Cardiac septum (tissue), 1 donor: ENCODE measurements at regions of chr19 and their contacts with region 1.

Region 1: GRCh38 chr19:49983645-49984229 is 22.8 kb upstream of the SIGLEC11 start:
- DNase-seq: no peak

Region 2: GRCh38 chr19:49937750-49938381 is 45.9 kb before region 1 on chr19:
- intact Hi-C with region 1: loop called (anchors 2 kb)
- DNase-seq: peak; percentile 91